ENCODE measurements at regions of chr6 and their contacts with region 1.

Region 1: GRCh38 chr6:139364302-139364981 is 10.0 kb downstream of the CITED2 start:
- DNase-seq: no peak
- ATAC-seq: peak; percentile 58; the same call in 1 of the 2 replicates
- H3K4me3 ChIP-seq: no peak overlapping the region
- H3K27ac ChIP-seq: no peak overlapping the region; the same call in 1 of the 2 replicates
- H3K4me1 ChIP-seq: peaks cover 18% of the 10 kb centered on the region
- H3K27me3 ChIP-seq: no peaks in the 10 kb centered on the region
- CTCF ChIP-seq: peak; percentile 61; the same call in 1 of the 2 replicates

Region 2: GRCh38 chr6:138817822-138818308 is 546.6 kb before region 1 on chr6:
- CTCF ChIA-PET with region 1: interaction called, 5 read pairs
- POLR2A ChIA-PET with region 1: no interaction called
- in situ Hi-C with region 1: no loop called
- intact Hi-C with region 1: loop called (anchors 1 kb)
- DNase-seq: no peak
- ATAC-seq: no peak; the same call in 1 of the 2 replicates
- H3K4me3 ChIP-seq: no peak overlapping the region
- H3K27ac ChIP-seq: no peak overlapping the region
- H3K4me1 ChIP-seq: no peaks in the 10 kb centered on the region
- H3K27me3 ChIP-seq: no peaks in the 10 kb centered on the region
- CTCF ChIP-seq: no peak

Region 3: DNA sequence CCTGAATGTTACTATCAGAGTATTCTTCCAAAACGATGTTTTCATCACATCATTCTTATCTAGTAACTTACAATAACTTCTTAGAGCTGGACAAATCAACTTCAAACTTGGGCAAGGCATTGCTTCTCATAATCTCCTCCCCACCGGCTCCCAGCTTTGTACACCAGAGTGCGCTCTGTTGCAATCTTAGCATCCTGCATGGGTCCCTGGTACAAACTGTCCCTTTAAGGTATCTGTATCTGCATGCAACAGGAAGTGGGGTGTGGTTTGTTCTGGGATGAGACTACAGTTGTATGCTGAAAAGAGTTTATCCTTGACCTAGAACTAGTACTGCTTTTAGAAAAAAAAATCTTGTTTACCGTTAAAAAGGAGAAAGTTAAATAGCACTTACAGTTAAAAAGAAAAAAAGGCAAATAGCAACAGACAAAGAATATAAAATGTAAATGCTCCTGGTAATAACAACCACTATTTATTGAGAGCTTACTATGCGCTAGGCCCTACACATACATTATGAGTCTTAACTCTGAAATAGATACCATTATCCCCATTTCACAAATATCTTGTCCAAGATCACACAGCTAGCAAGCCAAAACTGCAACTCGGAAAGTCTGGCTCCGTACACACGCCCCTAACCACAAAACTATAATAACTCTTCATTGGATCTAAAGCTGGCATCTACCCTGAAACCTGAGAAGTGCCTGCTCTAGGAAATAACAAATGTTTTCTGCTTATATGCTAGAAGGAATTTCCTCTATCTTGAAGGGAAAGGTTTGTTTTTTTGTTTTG is 239.4 kb before region 1 on chr6:
- CTCF ChIA-PET with region 1: no interaction called
- POLR2A ChIA-PET with region 1: no interaction called
- in situ Hi-C with region 1: no loop called
- intact Hi-C with region 1: loop called (anchors 5 kb)
- DNase-seq: no peak
- ATAC-seq: peak; percentile 88
- H3K4me3 ChIP-seq: no peak overlapping the region
- H3K27ac ChIP-seq: no peak overlapping the region
- H3K4me1 ChIP-seq: no peaks in the 10 kb centered on the region
- H3K27me3 ChIP-seq: no peaks in the 10 kb centered on the region; the same call in 1 of the 2 replicates
- CTCF ChIP-seq: peak; percentile 72

Region 4: GRCh38 chr6:139219271-139219729 is 145.1 kb before region 1 on chr6:
- CTCF ChIA-PET with region 1: interaction called, 14 read pairs
- POLR2A ChIA-PET with region 1: no interaction called
- in situ Hi-C with region 1: no loop called
- intact Hi-C with region 1: loop called (anchors 5 kb)
- DNase-seq: peak; percentile 61
- ATAC-seq: peak; percentile 100
- H3K4me3 ChIP-seq: no peak overlapping the region
- H3K27ac ChIP-seq: peak overlapping the region; percentile 17; the same call in 1 of the 2 replicates
- H3K4me1 ChIP-seq: no peaks in the 10 kb centered on the region
- H3K27me3 ChIP-seq: no peaks in the 10 kb centered on the region
- CTCF ChIP-seq: peak; percentile 88

Region 5: DNA sequence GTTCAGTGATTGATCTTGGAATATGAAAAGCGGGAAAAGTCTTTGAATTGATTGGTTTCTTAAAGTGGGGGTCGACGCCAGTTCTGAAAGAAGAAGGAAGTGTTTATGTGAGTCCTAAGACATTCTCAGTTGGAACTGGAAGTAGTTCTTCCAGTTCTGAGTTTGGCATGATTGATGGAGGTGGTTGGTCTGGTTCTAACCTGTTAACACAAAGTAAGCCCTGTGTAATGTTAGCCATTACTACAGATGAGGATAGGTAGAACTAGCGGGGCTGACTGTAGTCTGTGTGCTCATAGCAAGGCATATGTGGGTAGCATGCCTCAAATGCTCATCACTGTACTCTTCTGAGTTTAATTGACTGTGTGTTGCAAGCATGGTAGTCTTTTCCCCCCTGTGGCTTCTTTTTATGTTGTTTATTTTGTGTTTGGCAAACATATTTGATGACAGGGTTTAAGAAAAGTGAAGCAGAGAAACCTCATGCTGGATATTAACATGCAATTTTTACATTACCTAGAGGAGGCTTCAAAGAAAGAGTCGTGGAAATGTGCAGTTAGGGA is 14.9 kb before region 1 on chr6:
- CTCF ChIA-PET with region 1: no interaction called
- POLR2A ChIA-PET with region 1: no interaction called
- in situ Hi-C with region 1: no loop called
- intact Hi-C with region 1: no loop called
- DNase-seq: no peak
- ATAC-seq: no peak
- H3K4me3 ChIP-seq: no peak overlapping the region
- H3K27ac ChIP-seq: no peak overlapping the region
- H3K4me1 ChIP-seq: no peaks in the 10 kb centered on the region
- H3K27me3 ChIP-seq: no peaks in the 10 kb centered on the region
- CTCF ChIP-seq: no peak